HepG2 (cell line): ENCODE measurements at regions of chr10 and their contacts with region 1.

Region 1: DNA sequence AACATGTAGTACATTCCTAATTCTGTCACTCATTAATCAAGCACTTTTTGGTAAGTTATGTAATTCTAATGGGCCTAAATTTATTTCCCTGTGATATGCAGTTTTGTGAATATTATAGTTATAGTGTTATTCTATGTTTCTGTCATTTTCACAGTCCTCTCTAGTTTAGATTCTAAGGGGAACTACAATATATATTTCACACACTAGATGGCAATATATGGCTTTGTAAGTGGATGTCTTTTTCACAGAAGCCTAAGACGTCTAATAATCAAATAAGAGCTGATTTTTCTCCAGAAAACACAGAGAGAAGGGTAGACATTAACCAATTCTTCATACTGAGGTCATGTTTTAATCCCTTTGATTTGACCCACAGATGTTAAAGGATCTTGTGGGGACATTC is 18.0 kb downstream of the RNLS start:
- DNase-seq: no peak
- ATAC-seq: 0 out of 3 replicates have a peak, but pooled peaks have one; percentile 51
- H3K4me3 ChIP-seq: no peak overlapping the region
- H3K27ac ChIP-seq: no peak overlapping the region
- H3K4me1 ChIP-seq: no peaks in the 10 kb centered on the region
- H3K27me3 ChIP-seq: no peaks in the 10 kb centered on the region; a peak in 1 of 5 replicates
- CTCF ChIP-seq: no peak
- EP300 ChIP-seq: no peak
- POLR2A ChIP-seq: no peak
- RAD21 ChIP-seq: no peak

Region 2: GRCh38 chr10:87952612-87953011 is 612.5 kb before region 1 on chr10:
- CTCF ChIA-PET with region 1: no interaction called
- POLR2A ChIA-PET with region 1: no interaction called
- in situ Hi-C with region 1: no loop called
- intact Hi-C with region 1: no loop called
- DNase-seq: peak; percentile 6
- ATAC-seq: no peak
- H3K4me3 ChIP-seq: no peak overlapping the region
- H3K27ac ChIP-seq: no peak overlapping the region
- H3K4me1 ChIP-seq: no peaks in the 10 kb centered on the region; the same call in 1 of the 2 replicates
- H3K27me3 ChIP-seq: no peaks in the 10 kb centered on the region
- CTCF ChIP-seq: no peak
- EP300 ChIP-seq: no peak
- POLR2A ChIP-seq: no peak
- RAD21 ChIP-seq: no peak

Region 3: DNA sequence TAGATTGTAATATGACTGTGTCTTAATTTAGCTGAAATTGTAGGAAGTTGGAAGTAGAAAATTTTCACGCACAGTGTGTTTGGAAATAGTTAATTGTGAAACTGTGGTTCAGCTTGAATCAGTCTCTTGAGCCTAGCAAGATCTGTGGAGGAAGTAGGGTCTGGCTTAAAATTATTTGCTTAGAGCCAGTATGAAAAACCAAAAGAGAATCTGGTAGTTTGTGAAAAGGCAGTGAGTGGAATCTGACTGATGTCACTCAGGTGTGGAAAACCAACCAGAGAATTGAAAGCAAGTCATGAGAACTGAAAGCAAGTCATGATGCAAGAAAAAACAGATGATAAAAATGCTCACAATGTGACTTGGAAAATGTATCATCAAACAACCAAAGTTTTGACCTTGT is 33.0 kb after region 1 on chr10:
- CTCF ChIA-PET with region 1: no interaction called
- POLR2A ChIA-PET with region 1: no interaction called
- in situ Hi-C with region 1: no loop called
- intact Hi-C with region 1: no loop called
- DNase-seq: no peak
- ATAC-seq: no peak
- H3K4me3 ChIP-seq: no peak overlapping the region
- H3K27ac ChIP-seq: no peak overlapping the region
- H3K4me1 ChIP-seq: no peaks in the 10 kb centered on the region
- H3K27me3 ChIP-seq: no peaks in the 10 kb centered on the region
- CTCF ChIP-seq: no peak
- EP300 ChIP-seq: no peak
- POLR2A ChIP-seq: no peak
- RAD21 ChIP-seq: no peak

Region 4: GRCh38 chr10:88810196-88810961 is 245.3 kb after region 1 on chr10:
- CTCF ChIA-PET with region 1: no interaction called
- POLR2A ChIA-PET with region 1: no interaction called
- in situ Hi-C with region 1: no loop called
- intact Hi-C with region 1: loop called (anchors 1 kb)
- DNase-seq: peak; percentile 20
- ATAC-seq: peak; percentile 80
- H3K4me3 ChIP-seq: no peak overlapping the region
- H3K27ac ChIP-seq: no peak overlapping the region
- H3K4me1 ChIP-seq: no peaks in the 10 kb centered on the region
- H3K27me3 ChIP-seq: no peaks in the 10 kb centered on the region; a peak in 1 of 5 replicates
- CTCF ChIP-seq: peak; percentile 53
- EP300 ChIP-seq: no peak
- POLR2A ChIP-seq: no peak
- RAD21 ChIP-seq: no peak